ENCODE measurements at regions of chr3 and their contacts with region 1.

Region 1: GRCh38 chr3:98874602-98875249 is 26.8 kb downstream of the DCBLD2 start:
- DNase-seq: no peak
- ATAC-seq: no peak
- H3K4me3 ChIP-seq: no peak overlapping the region
- H3K27ac ChIP-seq: no peak overlapping the region
- H3K4me1 ChIP-seq: peaks cover 32% of the 10 kb centered on the region
- H3K27me3 ChIP-seq: no peaks in the 10 kb centered on the region
- CTCF ChIP-seq: no peak

Region 2: DNA sequence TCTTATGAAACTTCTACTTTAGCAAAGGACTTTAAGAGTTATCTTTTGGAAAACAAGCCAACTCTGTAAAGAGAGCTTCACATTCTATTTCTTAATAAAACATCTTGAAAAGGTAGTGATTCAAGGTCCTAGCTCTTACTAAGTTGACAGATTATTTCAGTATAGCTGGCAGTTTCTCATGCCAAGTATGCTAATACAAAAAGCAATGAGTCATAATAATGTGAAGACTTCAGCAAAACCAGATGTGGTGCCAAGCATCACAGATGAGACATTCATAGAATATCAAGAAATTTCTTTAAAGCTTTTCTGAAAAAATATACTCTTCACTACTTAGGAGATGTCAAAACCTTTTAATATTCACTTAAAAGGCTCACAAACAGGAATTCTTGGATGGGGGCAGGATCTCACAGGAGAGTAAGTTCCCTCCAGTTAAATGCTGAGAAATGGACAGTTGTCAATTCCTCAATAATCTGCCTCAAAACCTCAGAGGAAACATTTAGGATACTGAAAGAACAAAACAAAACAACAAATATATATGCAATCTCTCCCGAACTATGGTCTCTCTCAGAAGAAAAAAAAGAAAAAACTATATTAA is 18.8 kb before region 1 on chr3:
- CTCF ChIA-PET with region 1: no interaction called
- POLR2A ChIA-PET with region 1: no interaction called
- intact Hi-C with region 1: no loop called
- DNase-seq: peak; percentile 86
- ATAC-seq: peak; percentile 88
- H3K4me3 ChIP-seq: no peak overlapping the region
- H3K27ac ChIP-seq: 0 out of 2 replicates have a peak overlapping the region, but pooled peaks have one; percentile 5
- H3K4me1 ChIP-seq: peaks cover 16% of the 10 kb centered on the region
- H3K27me3 ChIP-seq: no peaks in the 10 kb centered on the region
- CTCF ChIP-seq: no peak

Region 3: GRCh38 chr3:99520513-99520912 is 645.8 kb after region 1 on chr3:
- CTCF ChIA-PET with region 1: no interaction called
- POLR2A ChIA-PET with region 1: no interaction called
- intact Hi-C with region 1: loop called (anchors 5 kb)
- DNase-seq: peak; percentile 75
- ATAC-seq: peak; percentile 79
- H3K4me3 ChIP-seq: peak overlapping the region; percentile 17; the same call in 1 of the 2 replicates
- H3K27ac ChIP-seq: peak overlapping the region; percentile 77
- H3K4me1 ChIP-seq: peaks cover 35% of the 10 kb centered on the region
- H3K27me3 ChIP-seq: no peaks in the 10 kb centered on the region
- CTCF ChIP-seq: no peak

Measured in PC-3 (cell line).